ENCODE measurements at regions of chr2 and their contacts with region 1.

Region 1: GRCh38 chr2:20962939-20963557 is 80.8 kb downstream of the APOB start:
- DNase-seq: peak; percentile 41 to 76 (median 67)
- ATAC-seq: no peak
- H3K4me3 ChIP-seq: no peak overlapping the region
- H3K4me3 Mint-ChIP-seq: no peak overlapping the region
- H3K27ac ChIP-seq: no peak overlapping the region
- H3K27ac Mint-ChIP-seq: no peak overlapping the region
- H3K4me1 ChIP-seq: no peaks in the 10 kb centered on the region
- H3K4me1 Mint-ChIP-seq: no peaks in the 10 kb centered on the region
- H3K27me3 ChIP-seq: no peaks in the 10 kb centered on the region
- H3K27me3 Mint-ChIP-seq: peaks cover 10% of the 10 kb centered on the region
- CTCF ChIP-seq: peak; percentile 71

Region 2: DNA sequence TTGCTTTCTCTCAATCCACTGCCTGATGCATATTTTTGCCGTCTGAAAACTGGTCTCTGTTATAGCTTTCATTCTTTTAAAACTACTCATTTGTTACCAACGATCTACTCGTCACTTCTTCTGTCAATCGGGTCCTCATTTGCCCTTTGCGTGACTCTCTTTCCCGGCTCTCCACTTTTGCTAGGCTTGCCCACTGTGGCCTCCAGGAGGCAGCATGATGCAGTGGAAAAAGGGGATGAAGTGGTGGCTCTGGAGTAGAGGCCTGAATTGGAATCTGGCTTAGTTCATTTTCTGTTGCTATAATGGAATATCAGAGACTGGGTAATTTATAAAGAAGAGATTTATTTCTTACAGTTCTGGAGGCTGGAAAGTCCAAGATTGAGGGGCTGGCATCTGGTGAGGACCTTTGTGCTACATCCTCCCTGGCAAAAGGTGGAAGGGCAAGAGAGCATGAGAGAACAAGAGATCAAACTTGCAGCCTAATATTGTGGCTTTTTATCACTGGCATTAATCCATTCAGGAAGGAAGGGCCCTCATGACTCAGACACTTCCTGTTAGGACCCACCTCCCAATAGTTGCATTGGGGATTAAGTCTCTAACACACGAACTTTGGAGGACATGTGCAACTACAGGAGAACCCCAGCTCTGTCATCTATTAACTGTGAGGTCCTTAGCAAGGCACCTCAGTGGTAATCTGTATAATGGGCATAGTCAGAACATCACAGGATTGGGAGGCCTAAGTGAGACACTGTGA is 280.7 kb before region 1 on chr2:
- CTCF ChIA-PET with region 1: interaction called, 6 read pairs
- POLR2A ChIA-PET with region 1: no interaction called
- intact Hi-C with region 1: loop called in 1 of 2 experiments (anchors 5 kb)
- DNase-seq: no peak
- ATAC-seq: no peak
- H3K4me3 ChIP-seq: no peak overlapping the region
- H3K4me3 Mint-ChIP-seq: no peak overlapping the region
- H3K27ac ChIP-seq: no peak overlapping the region
- H3K27ac Mint-ChIP-seq: peak overlapping the region; percentile 67
- H3K4me1 ChIP-seq: no peaks in the 10 kb centered on the region
- H3K4me1 Mint-ChIP-seq: no peaks in the 10 kb centered on the region
- H3K27me3 ChIP-seq: no peaks in the 10 kb centered on the region
- H3K27me3 Mint-ChIP-seq: no peaks in the 10 kb centered on the region
- CTCF ChIP-seq: no peak

Region 3: DNA sequence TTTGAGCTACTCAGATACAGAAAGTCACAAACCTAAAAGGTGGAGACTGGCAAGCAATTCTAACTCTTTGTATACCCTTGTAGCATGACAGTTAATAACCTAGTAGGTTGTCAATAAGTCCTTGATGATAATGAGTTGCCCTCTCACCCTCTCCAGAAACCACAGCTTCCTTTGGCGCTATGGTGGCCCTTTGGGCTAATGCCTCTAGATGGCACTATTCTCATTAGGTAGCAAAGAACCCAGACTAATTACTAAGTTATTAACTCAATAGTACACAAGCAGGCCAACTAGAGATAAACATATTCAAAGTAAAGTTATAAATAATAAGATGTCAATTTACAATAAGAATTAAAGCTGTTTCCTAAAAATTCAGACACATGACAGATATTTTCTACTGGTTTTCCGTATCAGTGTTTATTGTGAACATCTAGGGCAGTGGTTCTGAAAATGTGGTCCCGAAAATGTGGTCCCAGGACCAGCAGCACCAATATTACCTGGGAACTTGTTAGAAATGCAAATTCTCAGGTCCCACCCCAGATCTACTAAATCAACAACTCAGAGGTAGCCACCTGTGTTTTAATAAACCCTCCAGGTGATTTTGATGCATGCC is 181.3 kb before region 1 on chr2:
- CTCF ChIA-PET with region 1: interaction called, 6 read pairs
- POLR2A ChIA-PET with region 1: no interaction called
- intact Hi-C with region 1: loop called in 1 of 2 experiments (anchors 1 kb)
- DNase-seq: peak in 2 of 9 experiments; percentile 19 to 35
- ATAC-seq: no peak
- H3K4me3 ChIP-seq: no peak overlapping the region
- H3K4me3 Mint-ChIP-seq: no peak overlapping the region
- H3K27ac ChIP-seq: no peak overlapping the region
- H3K27ac Mint-ChIP-seq: no peak overlapping the region
- H3K4me1 ChIP-seq: no peaks in the 10 kb centered on the region
- H3K4me1 Mint-ChIP-seq: peaks cover 6% of the 10 kb centered on the region
- H3K27me3 ChIP-seq: no peaks in the 10 kb centered on the region
- H3K27me3 Mint-ChIP-seq: no peaks in the 10 kb centered on the region
- CTCF ChIP-seq: no peak